ENCODE measurements at regions of chr12 and their contacts with region 1.

Region 1: GRCh38 chr12:57175428-57176138 is 28.2 kb upstream of the LRP1-AS start:
- DNase-seq: peak; percentile 50 to 98
- H3K4me3 ChIP-seq: no peak overlapping the region
- H3K27ac ChIP-seq: no peak overlapping the region
- H3K4me1 ChIP-seq: no peaks in the 10 kb centered on the region
- H3K27me3 ChIP-seq: no peaks in the 10 kb centered on the region
- CTCF ChIP-seq: peak in 2 of 3 experiments; percentile 87 to 93; a peak in 3 of 4 replicates
- EP300 ChIP-seq: no peak
- POLR2A ChIP-seq: no peak
- RAD21 ChIP-seq: peak; percentile 45 to 61

Region 2: DNA sequence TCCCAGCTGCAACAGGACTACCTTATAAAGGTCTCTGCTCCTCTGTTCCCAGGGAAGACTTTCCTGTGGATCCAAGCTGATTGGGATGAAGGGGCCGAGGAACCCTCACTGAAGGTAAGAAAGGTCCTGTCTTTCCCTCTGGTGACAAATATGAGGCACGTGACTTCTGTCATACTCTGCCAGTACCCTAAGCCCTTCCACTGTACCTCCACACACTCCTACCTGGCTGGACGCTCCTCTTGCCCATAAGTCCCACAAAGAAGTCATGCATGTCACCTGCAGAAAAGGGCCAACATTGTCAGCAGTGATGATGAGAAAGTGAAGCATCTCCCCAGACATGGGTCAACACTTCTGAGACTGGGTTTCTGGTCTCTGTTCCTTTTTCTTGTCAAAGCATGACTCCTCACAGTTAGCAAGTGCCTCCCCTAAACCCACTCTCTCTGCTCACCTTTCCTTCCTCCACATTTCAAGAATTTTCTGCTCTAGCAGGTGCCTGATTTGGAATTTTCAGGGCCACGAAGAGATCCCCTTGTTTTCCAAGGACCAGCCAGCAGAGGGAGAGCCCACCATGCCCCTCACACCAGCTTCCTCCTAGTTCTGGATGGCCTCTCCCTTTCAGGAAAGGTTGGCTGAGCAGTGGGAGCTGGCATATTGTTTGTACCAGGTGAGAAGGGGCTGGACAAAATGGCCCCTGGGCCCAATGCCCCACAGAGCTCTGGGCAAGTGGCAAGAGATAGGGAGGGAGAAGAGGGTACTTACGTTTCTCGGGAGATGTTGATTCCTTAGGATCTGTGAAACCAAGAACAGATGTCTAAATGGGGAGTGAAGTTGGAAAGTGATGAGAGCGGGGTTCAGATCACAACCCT is 162.8 kb before region 1 on chr12:
- CTCF ChIA-PET with region 1: interaction called, 10 read pairs
- POLR2A ChIA-PET with region 1: no interaction called
- DNase-seq: no peak
- H3K4me3 ChIP-seq: no peak overlapping the region
- H3K27ac ChIP-seq: no peak overlapping the region
- H3K4me1 ChIP-seq: peaks cover 6 to 20% (median 15%) of the 10 kb centered on the region in 4 experiments
- H3K27me3 ChIP-seq: no peaks in the 10 kb centered on the region
- CTCF ChIP-seq: peak; percentile 41 to 59 (median 46)
- EP300 ChIP-seq: no peak
- POLR2A ChIP-seq: no peak
- RAD21 ChIP-seq: peak; percentile 60 to 62

Region 3: GRCh38 chr12:57088459-57089248 is 86.9 kb before region 1 on chr12 and contains the start of gene NAB2:
- CTCF ChIA-PET with region 1: interaction called, 12 read pairs
- POLR2A ChIA-PET with region 1: interaction called, 4 read pairs
- DNase-seq: peak in 1 of 2 experiments; percentile 87
- H3K4me3 ChIP-seq: peak within 1 kb of the TSS; percentile 92 to 96 (median 93)
- H3K27ac ChIP-seq: peak within 1 kb of the TSS; percentile 84
- H3K4me1 ChIP-seq: peaks cover 0 to 25% (median 15%) of the 10 kb centered on the region in 4 experiments; a peak in 6 of 7 replicates
- H3K27me3 ChIP-seq: no peaks in the 10 kb centered on the region
- CTCF ChIP-seq: no peak
- EP300 ChIP-seq: no peak
- POLR2A ChIP-seq: 0 out of 3 replicates have a peak, but pooled peaks of 1 of the 2 experiments have one; percentile 3
- RAD21 ChIP-seq: no peak
- total RNA-seq, gene NAB2: 20.6 and 20.9 TPM in 2 replicates

Region 4: DNA sequence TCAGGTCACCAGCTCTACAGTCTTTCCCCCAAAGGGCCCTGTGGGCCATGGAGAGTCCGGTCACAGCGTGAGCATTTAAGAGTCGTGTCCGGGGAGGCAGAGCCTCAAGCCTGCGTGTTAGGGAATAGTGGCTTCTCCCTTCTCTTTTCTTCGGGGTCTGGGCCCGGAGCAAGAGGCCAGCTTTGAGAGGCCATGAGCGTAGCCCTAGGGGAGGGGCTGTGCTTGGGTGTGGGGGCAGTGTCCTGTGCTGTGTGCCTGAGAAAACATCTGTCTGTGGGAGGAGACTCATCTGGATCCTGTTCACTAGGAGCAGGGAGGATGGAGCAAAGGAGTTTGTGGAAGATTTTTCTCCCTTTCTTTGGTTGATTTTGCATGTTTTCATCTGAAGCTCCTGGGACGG is 33.5 kb before region 1 on chr12:
- CTCF ChIA-PET with region 1: interaction called, 58 read pairs
- POLR2A ChIA-PET with region 1: interaction called, 9 read pairs
- DNase-seq: no peak
- H3K4me3 ChIP-seq: no peak overlapping the region
- H3K27ac ChIP-seq: no peak overlapping the region
- H3K4me1 ChIP-seq: peaks cover 0 to 6% (median under 1%) of the 10 kb centered on the region in 4 experiments; a peak in 2 of 7 replicates
- H3K27me3 ChIP-seq: no peaks in the 10 kb centered on the region
- CTCF ChIP-seq: no peak
- EP300 ChIP-seq: no peak
- POLR2A ChIP-seq: no peak
- RAD21 ChIP-seq: no peak

Region 5: DNA sequence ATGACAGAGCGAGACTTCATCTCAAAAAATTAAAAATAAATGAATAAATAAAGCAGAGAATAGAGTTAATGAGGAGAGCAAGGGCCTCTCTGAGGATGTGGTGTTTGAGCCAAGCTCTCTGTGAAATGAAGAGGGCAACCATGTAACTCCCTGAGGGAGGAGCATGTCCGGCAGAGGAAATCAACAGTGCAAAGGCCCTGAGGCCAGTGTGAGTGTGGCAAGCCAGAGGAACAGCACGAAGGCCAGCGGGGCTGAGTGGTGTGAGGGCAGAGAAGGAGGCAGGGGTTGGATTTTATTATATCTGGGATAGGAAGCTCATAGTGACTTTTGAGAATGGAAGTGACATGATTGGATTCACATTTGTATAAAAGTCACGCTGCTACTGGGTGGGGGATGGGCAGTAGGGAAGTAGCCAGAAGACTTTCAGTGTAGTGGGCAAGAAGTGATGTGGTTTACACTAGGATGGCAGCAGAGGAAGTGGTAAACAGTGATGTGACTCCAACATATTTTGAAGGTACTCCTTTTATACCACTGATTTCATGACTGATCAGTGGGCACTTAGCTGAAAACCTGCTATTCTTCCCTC is 17.9 kb before region 1 on chr12:
- CTCF ChIA-PET with region 1: interaction called, 150 read pairs
- POLR2A ChIA-PET with region 1: interaction called, 75 read pairs
- DNase-seq: no peak
- H3K4me3 ChIP-seq: no peak overlapping the region
- H3K27ac ChIP-seq: no peak overlapping the region
- H3K4me1 ChIP-seq: no peaks in the 10 kb centered on the region
- H3K27me3 ChIP-seq: no peaks in the 10 kb centered on the region
- CTCF ChIP-seq: no peak
- EP300 ChIP-seq: no peak
- POLR2A ChIP-seq: 0 out of 3 replicates have a peak, but pooled peaks of 1 of the 2 experiments have one; percentile 13
- RAD21 ChIP-seq: no peak

Region 6: GRCh38 chr12:57213058-57213715 is 37.6 kb after region 1 on chr12:
- CTCF ChIA-PET with region 1: interaction called, 78 read pairs
- POLR2A ChIA-PET with region 1: interaction called, 5 read pairs
- DNase-seq: peak in 1 of 2 experiments; percentile 92
- H3K4me3 ChIP-seq: peak overlapping the region in 3 of 4 experiments; percentile 4 to 13 (median 12); a peak in 3 of 8 replicates
- H3K27ac ChIP-seq: no peak overlapping the region
- H3K4me1 ChIP-seq: peaks cover 9 to 35% (median 25%) of the 10 kb centered on the region in 4 experiments
- H3K27me3 ChIP-seq: peaks cover 33 to 44% (median 42%) of the 10 kb centered on the region in 4 experiments
- CTCF ChIP-seq: peak in 2 of 3 experiments; percentile 88 to 90; a peak in 3 of 4 replicates
- EP300 ChIP-seq: no peak
- POLR2A ChIP-seq: peak in 1 of 2 experiments; percentile 22; a peak in 1 of 3 replicates
- RAD21 ChIP-seq: peak; percentile 76